A549 (cell line): ENCODE measurements at regions of chr17 and their contacts with region 1.

Region 1: GRCh38 chr17:43760254-43760852 is 1.8 kb upstream of the SOST start:
- DNase-seq: peak; percentile 96 to 98
- ATAC-seq: peak; percentile 86 to 92
- H3K4me3 ChIP-seq: no peak overlapping the region
- H3K27ac ChIP-seq: peak overlapping the region in 1 of 2 experiments; percentile 29; a peak in 1 of 6 replicates
- H3K4me1 ChIP-seq: peaks cover 12% of the 10 kb centered on the region
- CTCF ChIP-seq: peak; percentile 100
- EP300 ChIP-seq: no peak
- POLR2A ChIP-seq: no peak
- RAD21 ChIP-seq: peak; percentile 100

Region 2: GRCh38 chr17:43645765-43646481 is 114.4 kb before region 1 on chr17:
- CTCF ChIA-PET with region 1: interaction called, 14 read pairs
- POLR2A ChIA-PET with region 1: no interaction called
- DNase-seq: no peak
- ATAC-seq: no peak
- H3K4me3 ChIP-seq: no peak overlapping the region
- H3K27ac ChIP-seq: no peak overlapping the region
- H3K4me1 ChIP-seq: no peaks in the 10 kb centered on the region
- CTCF ChIP-seq: no peak
- EP300 ChIP-seq: no peak
- POLR2A ChIP-seq: no peak
- RAD21 ChIP-seq: no peak

Region 3: DNA sequence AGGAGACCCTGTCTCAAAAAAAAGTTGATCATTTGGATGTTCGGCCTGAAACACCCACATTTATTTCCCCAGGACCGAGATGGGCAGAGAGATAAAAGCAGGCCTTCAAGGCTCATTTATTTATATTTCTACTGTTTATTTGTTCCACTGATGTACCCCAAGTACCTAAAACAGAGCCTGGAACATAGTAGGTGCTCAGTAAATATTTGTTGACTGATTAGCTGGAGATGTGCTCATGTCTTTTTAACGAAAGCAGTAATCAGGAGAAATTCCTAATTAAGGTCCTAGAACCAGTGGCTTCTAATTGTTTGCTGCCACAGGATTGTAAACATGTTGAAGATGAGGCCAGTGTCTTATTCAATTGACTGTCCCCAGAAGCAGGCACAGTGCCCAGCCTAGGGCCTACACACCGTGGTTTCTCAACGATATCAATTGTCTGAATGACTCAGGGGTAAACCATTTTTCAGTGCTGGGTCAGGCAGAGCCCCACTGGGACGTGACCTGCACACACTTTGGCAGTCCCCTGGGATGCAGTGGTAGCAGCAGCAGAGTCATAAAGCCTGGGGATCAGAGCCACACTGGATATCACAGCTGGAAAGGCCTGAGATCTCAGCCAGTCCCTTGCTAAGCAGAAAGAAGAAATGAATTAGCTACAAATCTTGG is 36.5 kb before region 1 on chr17:
- CTCF ChIA-PET with region 1: interaction called, 180 read pairs
- POLR2A ChIA-PET with region 1: interaction called, 7 read pairs
- DNase-seq: peak; percentile 85 to 94
- ATAC-seq: peak; percentile 72 to 74
- H3K4me3 ChIP-seq: no peak overlapping the region
- H3K27ac ChIP-seq: peak overlapping the region; percentile 93 to 95
- H3K4me1 ChIP-seq: peaks cover 48% of the 10 kb centered on the region
- CTCF ChIP-seq: no peak
- EP300 ChIP-seq: 0 out of 5 replicates have a peak, but pooled peaks of 1 of the 2 experiments have one; percentile 17
- POLR2A ChIP-seq: no peak
- RAD21 ChIP-seq: 0 out of 5 replicates have a peak, but pooled peaks of 1 of the 2 experiments have one; percentile 28

Region 4: GRCh38 chr17:43778337-43779144 is 18.2 kb after region 1 on chr17 and contains the start of gene DUSP3:
- CTCF ChIA-PET with region 1: interaction called, 151 read pairs
- POLR2A ChIA-PET with region 1: interaction called, 11 read pairs
- DNase-seq: peak; percentile 96 to 97
- ATAC-seq: peak; percentile 90 to 93
- H3K4me3 ChIP-seq: peak within 1 kb of the TSS; percentile 71
- H3K27ac ChIP-seq: peak within 1 kb of the TSS; percentile 93 to 98
- H3K4me1 ChIP-seq: peaks cover 16% of the 10 kb centered on the region
- CTCF ChIP-seq: no peak
- EP300 ChIP-seq: no peak
- POLR2A ChIP-seq: peak; percentile 72
- RAD21 ChIP-seq: no peak
- polyA plus RNA-seq, gene DUSP3: 60.2 and 62.2 TPM in 2 replicates